MCF 10A (cell line): ENCODE measurements at regions of chr5 and their contacts with region 1.

Region 1: GRCh38 chr5:132963175-132964104 is at the start of gene AFF4:
- DNase-seq: peak; percentile 98
- H3K4me3 Mint-ChIP-seq: peak within 1 kb of the TSS; percentile 95
- H3K27ac Mint-ChIP-seq: peak within 1 kb of the TSS; percentile 100
- H3K4me1 Mint-ChIP-seq: peaks cover 17% of the 10 kb centered on the region
- H3K27me3 Mint-ChIP-seq: no peaks in the 10 kb centered on the region
- CTCF ChIP-seq: no peak
- total RNA-seq, gene AFF4: 200 and 206 TPM in 2 replicates

Region 2: GRCh38 chr5:132500931-132501630 is 462.4 kb before region 1 on chr5:
- CTCF ChIA-PET with region 1: no interaction called
- POLR2A ChIA-PET with region 1: no interaction called
- intact Hi-C with region 1: no loop called
- DNase-seq: peak; percentile 91
- H3K4me3 Mint-ChIP-seq: no peak overlapping the region
- H3K27ac Mint-ChIP-seq: peak overlapping the region; percentile 83
- H3K4me1 Mint-ChIP-seq: peaks cover 35% of the 10 kb centered on the region
- H3K27me3 Mint-ChIP-seq: no peaks in the 10 kb centered on the region
- CTCF ChIP-seq: peak; percentile 99

Region 3: DNA sequence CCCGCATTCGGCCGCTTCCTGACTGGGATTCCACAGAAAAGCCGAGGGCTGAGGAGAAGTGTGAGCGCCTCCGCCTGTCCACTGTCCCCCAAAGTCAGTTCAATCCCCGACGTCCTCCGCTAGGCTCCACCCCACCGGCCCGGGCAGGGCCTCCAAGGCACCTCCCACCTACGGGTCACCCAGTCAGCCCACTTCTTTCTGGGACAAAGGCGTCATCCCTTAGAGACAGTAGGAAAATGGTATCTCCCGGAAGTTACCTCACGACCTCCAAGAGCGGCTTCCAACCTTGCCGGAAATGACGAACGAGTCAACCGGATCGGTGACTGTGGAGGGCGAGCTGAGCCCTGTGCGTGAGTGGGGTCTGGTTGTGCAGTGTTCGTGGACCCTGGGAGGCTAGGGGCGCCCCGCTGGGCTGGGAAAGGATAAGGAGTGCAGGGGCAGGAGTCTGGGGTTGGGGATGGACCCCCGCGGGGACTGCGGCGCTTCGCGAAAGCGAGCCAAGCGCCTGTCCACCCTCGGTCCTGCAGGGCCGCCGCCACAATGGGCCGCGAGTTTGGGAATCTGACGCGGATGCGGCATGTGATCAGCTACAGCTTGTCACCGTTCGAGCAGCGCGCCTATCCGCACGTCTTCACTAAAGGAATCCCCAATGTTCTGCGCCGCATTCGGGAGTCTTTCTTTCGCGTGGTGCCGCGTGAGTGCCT is 96.9 kb before region 1 on chr5 and contains the starts of genes GDF9 and UQCRQ:
- CTCF ChIA-PET with region 1: no interaction called
- POLR2A ChIA-PET with region 1: interaction called, 11 read pairs
- intact Hi-C with region 1: no loop called
- DNase-seq: peak; percentile 100
- H3K4me3 Mint-ChIP-seq: peak within 1 kb of the TSS; percentile 93
- H3K27ac Mint-ChIP-seq: peak within 1 kb of the TSS; percentile 96
- H3K4me1 Mint-ChIP-seq: peaks cover 17% of the 10 kb centered on the region
- H3K27me3 Mint-ChIP-seq: no peaks in the 10 kb centered on the region
- CTCF ChIP-seq: peak; percentile 32
- total RNA-seq, gene GDF9: 0.51 and 0.79 TPM in 2 replicates
- total RNA-seq, gene UQCRQ: 974 and 1,181 TPM in 2 replicates

Region 4: GRCh38 chr5:132943362-132944022 is 19.9 kb before region 1 on chr5:
- CTCF ChIA-PET with region 1: interaction called, 5 read pairs
- POLR2A ChIA-PET with region 1: interaction called, 13 read pairs
- intact Hi-C with region 1: no loop called
- DNase-seq: no peak
- H3K4me3 Mint-ChIP-seq: no peak overlapping the region
- H3K27ac Mint-ChIP-seq: no peak overlapping the region
- H3K4me1 Mint-ChIP-seq: peaks cover 27% of the 10 kb centered on the region
- H3K27me3 Mint-ChIP-seq: no peaks in the 10 kb centered on the region
- CTCF ChIP-seq: no peak

Region 5: GRCh38 chr5:132979367-132979940 is 16.0 kb after region 1 on chr5:
- CTCF ChIA-PET with region 1: interaction called, 3 read pairs
- POLR2A ChIA-PET with region 1: interaction called, 35 read pairs
- intact Hi-C with region 1: no loop called
- DNase-seq: peak; percentile 73
- H3K4me3 Mint-ChIP-seq: no peak overlapping the region
- H3K27ac Mint-ChIP-seq: no peak overlapping the region
- H3K4me1 Mint-ChIP-seq: peaks cover 6% of the 10 kb centered on the region
- H3K27me3 Mint-ChIP-seq: no peaks in the 10 kb centered on the region
- CTCF ChIP-seq: no peak

Region 6: GRCh38 chr5:133025804-133026663 is 62.6 kb after region 1 on chr5 and contains the start of gene ZCCHC10:
- CTCF ChIA-PET with region 1: interaction called, 4 read pairs
- POLR2A ChIA-PET with region 1: interaction called, 85 read pairs
- intact Hi-C with region 1: loop called (anchors 2 kb)
- DNase-seq: peak; percentile 95
- H3K4me3 Mint-ChIP-seq: peak within 1 kb of the TSS; percentile 88
- H3K27ac Mint-ChIP-seq: peak within 1 kb of the TSS; percentile 94
- H3K4me1 Mint-ChIP-seq: peaks cover 19% of the 10 kb centered on the region
- H3K27me3 Mint-ChIP-seq: no peaks in the 10 kb centered on the region
- CTCF ChIP-seq: no peak
- total RNA-seq, gene ZCCHC10: 35.0 and 37.7 TPM in 2 replicates

Region 7: GRCh38 chr5:133041910-133042309 is 78.5 kb after region 1 on chr5:
- CTCF ChIA-PET with region 1: no interaction called
- POLR2A ChIA-PET with region 1: interaction called, 41 read pairs
- intact Hi-C with region 1: no loop called
- DNase-seq: peak; percentile 81
- H3K4me3 Mint-ChIP-seq: no peak overlapping the region
- H3K27ac Mint-ChIP-seq: peak overlapping the region; percentile 10
- H3K4me1 Mint-ChIP-seq: peaks cover 36% of the 10 kb centered on the region
- H3K27me3 Mint-ChIP-seq: no peaks in the 10 kb centered on the region
- CTCF ChIP-seq: peak; percentile 34

Region 8: GRCh38 chr5:134004592-134005375 is 1041.3 kb after region 1 on chr5 and contains the start of gene VDAC1:
- CTCF ChIA-PET with region 1: no interaction called
- POLR2A ChIA-PET with region 1: interaction called, 19 read pairs
- intact Hi-C with region 1: no loop called
- DNase-seq: peak; percentile 82
- H3K4me3 Mint-ChIP-seq: peak within 1 kb of the TSS; percentile 90
- H3K27ac Mint-ChIP-seq: peak within 1 kb of the TSS; percentile 95
- H3K4me1 Mint-ChIP-seq: peaks cover 40% of the 10 kb centered on the region
- H3K27me3 Mint-ChIP-seq: no peaks in the 10 kb centered on the region
- CTCF ChIP-seq: no peak
- total RNA-seq, gene VDAC1: 262 and 334 TPM in 2 replicates